Heart left ventricle (tissue), 16 donors: ENCODE measurements at regions of chrX and their contacts with region 1.

Region 1: GRCh38 chrX:53563324-53563723 is 123.2 kb downstream of the HUWE1 start:
- DNase-seq: no peak
- ATAC-seq: no peak
- H3K4me3 ChIP-seq: no peak overlapping the region
- H3K27ac ChIP-seq: no peak overlapping the region
- H3K4me1 ChIP-seq: no peaks in the 10 kb centered on the region
- H3K27me3 ChIP-seq: no peaks in the 10 kb centered on the region
- CTCF ChIP-seq: no peak
- POLR2A ChIP-seq: no peak

Region 2: DNA sequence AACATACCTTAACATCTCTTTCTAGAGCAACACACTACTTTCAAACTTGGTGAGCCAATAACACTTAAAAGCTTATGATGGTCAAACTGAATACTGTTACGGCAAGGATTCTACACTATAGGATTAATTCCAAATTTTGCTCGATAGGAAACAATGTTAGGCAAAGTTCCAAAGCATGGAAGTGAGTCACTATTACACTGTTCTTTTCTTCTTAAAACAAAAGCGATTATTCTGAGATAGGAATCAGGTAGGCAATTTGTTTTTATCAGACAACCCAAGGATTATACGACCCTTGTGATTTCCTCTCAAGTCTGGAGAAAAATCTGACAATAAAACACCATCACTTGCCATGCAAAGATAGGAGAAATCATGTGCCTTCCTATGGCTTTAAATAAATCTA is 41.7 kb after region 1 on chrX:
- intact Hi-C with region 1: loop called in 2 of 10 experiments (anchors 5 to 10 kb)
- DNase-seq: no peak
- ATAC-seq: peak in 1 of 4 donors; percentile 34
- H3K4me3 ChIP-seq: no peak overlapping the region
- H3K27ac ChIP-seq: no peak overlapping the region
- H3K4me1 ChIP-seq: no peaks in the 10 kb centered on the region
- H3K27me3 ChIP-seq: peaks cover 0 to 8% (median 0%) of the 10 kb centered on the region in 9 donors
- CTCF ChIP-seq: no peak
- POLR2A ChIP-seq: no peak

Region 3: GRCh38 chrX:53616946-53617345 is 53.6 kb after region 1 on chrX:
- intact Hi-C with region 1: loop called in 3 of 10 experiments (anchors 5 to 10 kb)
- DNase-seq: no peak
- ATAC-seq: no peak
- H3K4me3 ChIP-seq: no peak overlapping the region
- H3K27ac ChIP-seq: no peak overlapping the region
- H3K4me1 ChIP-seq: no peaks in the 10 kb centered on the region
- H3K27me3 ChIP-seq: peaks cover 0 to 5% (median 0%) of the 10 kb centered on the region in 9 donors
- CTCF ChIP-seq: no peak
- POLR2A ChIP-seq: no peak